Heart left ventricle (tissue), 16 donors: ENCODE measurements at regions of chr17 and their contacts with region 1.

Region 1: DNA sequence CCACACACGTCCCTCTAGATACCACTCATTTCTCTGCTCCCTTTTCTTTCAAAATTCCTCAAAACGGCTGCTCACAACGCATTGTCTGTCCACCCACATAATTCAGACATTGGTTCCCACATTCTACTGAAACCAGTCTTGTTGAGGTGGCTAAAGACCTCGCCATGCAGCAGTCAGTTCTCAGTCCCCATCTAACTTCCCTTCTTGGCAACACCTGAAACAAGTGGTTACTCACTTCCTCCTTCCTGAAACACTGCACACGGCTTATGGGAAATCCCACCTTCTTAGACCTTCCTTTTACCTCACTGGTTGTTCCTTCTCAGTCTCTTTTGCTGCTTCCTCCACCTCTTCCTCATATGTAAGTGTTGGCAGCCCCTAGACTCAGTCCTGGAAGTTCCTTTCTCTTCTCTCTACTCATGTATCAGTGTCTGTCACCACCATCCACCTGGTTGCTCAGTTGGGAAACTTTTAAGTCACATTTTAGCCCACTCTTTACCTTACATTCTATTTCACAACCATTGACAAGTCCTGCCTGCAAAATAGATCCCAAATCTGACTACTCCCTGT is 277.1 kb downstream of the CEP112 start:
- DNase-seq: no peak
- ATAC-seq: peak in 1 of 4 donors; percentile 27
- H3K4me3 ChIP-seq: no peak overlapping the region
- H3K27ac ChIP-seq: no peak overlapping the region
- H3K4me1 ChIP-seq: peaks cover 0 to 24% (median 15%) of the 10 kb centered on the region in 12 donors
- H3K27me3 ChIP-seq: no peaks in the 10 kb centered on the region
- CTCF ChIP-seq: no peak
- POLR2A ChIP-seq: no peak

Region 2: DNA sequence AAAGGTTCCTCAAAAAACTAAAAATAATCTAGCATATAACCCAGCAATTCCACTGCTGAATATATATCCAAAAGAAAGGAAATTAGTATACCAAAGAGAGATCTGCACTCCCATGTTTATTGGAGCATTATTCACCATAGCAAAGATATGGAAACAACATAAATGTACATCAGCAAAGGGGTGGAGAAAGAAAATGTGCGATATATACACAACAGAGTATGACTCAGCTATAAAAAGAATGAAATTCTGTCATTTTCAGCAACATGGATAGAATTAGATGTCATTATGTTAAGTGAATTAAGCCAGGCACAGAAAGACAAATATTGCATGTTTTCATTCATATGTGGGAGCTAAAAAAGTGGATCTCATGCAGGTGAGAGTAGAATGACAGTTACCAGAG is 73.8 kb before region 1 on chr17:
- intact Hi-C with region 1: loop called in 1 of 10 experiments (anchors 5 kb)
- DNase-seq: no peak
- ATAC-seq: no peak
- H3K4me3 ChIP-seq: no peak overlapping the region
- H3K27ac ChIP-seq: no peak overlapping the region
- H3K4me1 ChIP-seq: no peaks in the 10 kb centered on the region
- H3K27me3 ChIP-seq: no peaks in the 10 kb centered on the region
- CTCF ChIP-seq: no peak
- POLR2A ChIP-seq: no peak

Region 3: DNA sequence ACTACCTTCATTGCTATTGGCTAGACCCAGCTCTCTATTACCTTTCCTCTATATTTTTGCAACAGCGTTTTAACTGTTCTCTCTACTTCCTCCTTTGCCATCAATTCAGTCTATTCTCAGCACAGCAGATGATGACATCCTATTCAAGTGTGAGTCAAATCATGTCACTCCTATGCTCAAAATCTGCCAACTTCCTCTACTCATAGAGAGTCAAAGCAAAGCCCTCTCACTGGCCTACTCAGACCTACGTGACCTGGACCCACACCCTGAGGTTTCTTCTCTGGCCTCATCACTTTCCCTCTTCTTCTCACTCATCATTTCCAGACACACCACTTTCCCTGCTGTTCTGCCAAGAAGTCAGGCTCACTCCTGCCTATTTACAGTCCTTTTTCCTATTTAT is 64.4 kb before region 1 on chr17:
- intact Hi-C with region 1: loop called in 1 of 10 experiments (anchors 10 kb)
- DNase-seq: no peak
- ATAC-seq: peak in 2 of 4 donors; percentile 44 to 47
- H3K4me3 ChIP-seq: no peak overlapping the region
- H3K27ac ChIP-seq: peak overlapping the region in 1 of 12 donors; percentile 28
- H3K4me1 ChIP-seq: no peaks in the 10 kb centered on the region
- H3K27me3 ChIP-seq: no peaks in the 10 kb centered on the region
- CTCF ChIP-seq: no peak
- POLR2A ChIP-seq: no peak

Region 4: GRCh38 chr17:66076546-66077125 is 161.8 kb after region 1 on chr17:
- intact Hi-C with region 1: no loop called
- DNase-seq: peak in 4 of 5 donors; percentile 10 to 60 (median 34)
- ATAC-seq: no peak
- H3K4me3 ChIP-seq: no peak overlapping the region
- H3K27ac ChIP-seq: no peak overlapping the region
- H3K4me1 ChIP-seq: peaks cover 0 to 5% (median 0%) of the 10 kb centered on the region in 12 donors
- H3K27me3 ChIP-seq: no peaks in the 10 kb centered on the region
- CTCF ChIP-seq: no peak
- POLR2A ChIP-seq: no peak

Region 5: GRCh38 chr17:66087073-66087472 is 172.2 kb after region 1 on chr17:
- intact Hi-C with region 1: no loop called
- DNase-seq: no peak
- ATAC-seq: no peak
- H3K4me3 ChIP-seq: no peak overlapping the region
- H3K27ac ChIP-seq: no peak overlapping the region
- H3K4me1 ChIP-seq: no peaks in the 10 kb centered on the region
- H3K27me3 ChIP-seq: no peaks in the 10 kb centered on the region
- CTCF ChIP-seq: no peak
- POLR2A ChIP-seq: no peak

Region 6: GRCh38 chr17:66228887-66229782 is 314.3 kb after region 1 on chr17 and contains the start of gene APOH:
- intact Hi-C with region 1: no loop called
- DNase-seq: no peak
- ATAC-seq: no peak
- H3K4me3 ChIP-seq: no peak within 1 kb of the TSS
- H3K27ac ChIP-seq: no peak within 1 kb of the TSS
- H3K4me1 ChIP-seq: no peaks in the 10 kb centered on the region
- H3K27me3 ChIP-seq: no peaks in the 10 kb centered on the region
- CTCF ChIP-seq: no peak
- POLR2A ChIP-seq: no peak
- total RNA-seq, gene APOH: 0.30 TPM in 1 of 9 donors, not detected in the others